A673 (cell line): ENCODE measurements at regions of chr14 and their contacts with region 1.

Region 1: DNA sequence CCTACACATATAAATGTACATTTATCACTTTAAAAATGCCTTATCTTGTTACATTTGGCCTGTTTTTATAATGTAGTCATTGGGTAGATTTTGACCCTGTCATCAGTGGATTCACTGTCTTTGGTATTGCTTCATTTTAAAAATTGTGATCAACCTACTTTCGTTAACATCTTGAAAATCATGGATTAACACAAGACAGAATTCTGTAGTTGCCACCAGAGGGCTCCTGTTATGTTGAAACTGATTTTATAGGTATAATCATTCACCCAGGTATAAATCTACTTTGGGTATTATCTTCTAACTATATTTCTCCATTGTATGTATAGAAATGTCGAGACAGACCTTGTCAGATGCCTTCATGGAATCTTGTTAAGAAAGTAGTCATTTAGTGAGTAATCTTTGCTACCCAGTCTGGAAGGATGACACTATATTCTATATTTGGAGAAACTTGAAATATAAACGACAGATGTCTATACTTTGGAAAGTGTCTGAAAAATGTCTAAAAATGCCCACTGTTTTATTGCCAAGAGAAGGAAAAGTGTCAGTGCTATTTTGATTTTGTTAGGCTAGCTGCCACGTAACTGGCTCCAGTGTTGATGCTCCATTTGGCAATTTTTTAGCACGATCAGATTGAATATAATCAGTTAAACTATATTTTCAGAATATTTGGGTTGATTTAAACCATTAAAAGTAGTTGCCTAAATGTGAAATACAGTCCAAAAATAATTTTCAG is 129.4 kb downstream of the PELI2 start:
- DNase-seq: no peak
- H3K4me3 ChIP-seq: no peak overlapping the region
- H3K27ac ChIP-seq: no peak overlapping the region
- H3K4me1 ChIP-seq: peaks cover 11% of the 10 kb centered on the region
- H3K27me3 ChIP-seq: no peaks in the 10 kb centered on the region
- CTCF ChIP-seq: peak; percentile 60

Region 2: GRCh38 chr14:56422703-56423213 is 175.1 kb after region 1 on chr14:
- CTCF ChIA-PET with region 1: no interaction called
- POLR2A ChIA-PET with region 1: no interaction called
- intact Hi-C with region 1: loop called (anchors 10 kb)
- DNase-seq: peak; percentile 81
- H3K4me3 ChIP-seq: no peak overlapping the region
- H3K27ac ChIP-seq: peak overlapping the region; percentile 73
- H3K4me1 ChIP-seq: peaks cover 25% of the 10 kb centered on the region
- H3K27me3 ChIP-seq: no peaks in the 10 kb centered on the region
- CTCF ChIP-seq: peak; percentile 88